Tibial artery (tissue), 4 donors: ENCODE measurements at regions of chr12 and their contacts with region 1.

Region 1: GRCh38 chr12:51923501-51924271 is 16.4 kb downstream of the ACVRL1 start:
- DNase-seq: peak; percentile 59 to 71
- H3K4me3 ChIP-seq: no peak overlapping the region
- H3K27ac ChIP-seq: no peak overlapping the region
- H3K4me1 ChIP-seq: peaks cover 0 to 12% (median 9%) of the 10 kb centered on the region in 4 donors
- H3K27me3 ChIP-seq: peaks cover 0 to 17% of the 10 kb centered on the region in 2 donors
- CTCF ChIP-seq: peak; percentile 58 to 82

Region 2: DNA sequence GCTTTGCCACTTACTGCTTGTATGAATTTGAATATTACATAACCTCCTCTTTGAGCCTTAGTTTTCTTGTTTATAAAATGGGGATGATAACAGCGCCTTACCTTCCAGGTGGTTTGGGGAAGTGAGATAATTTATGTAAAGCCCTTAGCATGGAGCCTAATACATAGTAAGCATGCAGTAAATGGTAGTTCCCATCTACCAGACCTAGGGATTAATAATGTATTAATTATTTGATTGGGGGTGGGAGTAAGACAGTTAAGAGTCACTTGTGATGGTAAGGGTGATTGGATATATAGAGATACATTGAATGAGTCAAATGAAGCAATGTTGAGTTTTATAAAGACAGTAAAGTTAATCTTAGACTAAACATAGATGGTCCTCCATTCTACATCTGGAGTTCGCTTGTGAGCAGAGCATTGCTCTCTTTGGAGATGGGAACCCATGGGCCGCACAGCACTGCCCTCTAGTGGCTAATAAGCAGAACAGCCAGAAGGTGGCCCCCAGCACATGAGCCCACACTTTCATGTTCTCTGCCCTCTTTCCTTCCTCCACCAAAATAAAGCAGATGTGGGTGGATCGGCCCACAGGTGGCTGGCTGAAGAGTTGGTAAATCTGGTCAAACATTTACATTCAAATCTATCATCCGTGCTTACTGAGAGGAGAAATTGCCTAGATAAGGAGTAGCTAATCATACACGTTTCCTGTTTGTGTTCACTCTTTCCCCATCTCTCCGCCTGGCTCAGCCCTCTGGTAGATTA is 56.5 kb after region 1 on chr12:
- intact Hi-C with region 1: loop called (anchors 5 kb)
- DNase-seq: peak in 1 of 2 donors; percentile 56
- H3K4me3 ChIP-seq: no peak overlapping the region
- H3K27ac ChIP-seq: no peak overlapping the region
- H3K4me1 ChIP-seq: no peaks in the 10 kb centered on the region
- H3K27me3 ChIP-seq: no peaks in the 10 kb centered on the region
- CTCF ChIP-seq: peak; percentile 90 to 95